HepG2 (cell line): ENCODE measurements at regions of chr18 and their contacts with region 1.

Region 1: DNA sequence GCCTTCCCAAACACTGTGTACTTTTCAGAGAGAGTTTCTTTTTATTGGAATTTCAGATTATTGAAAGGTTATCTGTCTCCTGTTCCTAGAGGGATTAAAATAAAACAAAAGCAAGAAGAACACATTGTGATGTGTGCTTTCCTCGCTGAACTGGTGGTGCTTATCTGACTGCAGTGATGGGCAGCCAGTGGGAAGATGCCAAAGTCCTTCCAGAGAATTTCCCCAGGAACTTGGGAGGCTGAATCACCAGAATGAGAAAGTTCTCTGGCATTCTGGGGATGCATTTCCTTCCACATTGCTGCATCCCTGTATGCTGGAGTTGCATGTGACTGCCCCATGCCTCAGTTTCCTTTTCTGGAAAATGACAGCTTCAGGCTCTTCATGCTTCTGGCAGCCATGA is 53.9 kb upstream of the SEC11C start:
- DNase-seq: no peak
- ATAC-seq: no peak
- H3K4me3 ChIP-seq: no peak overlapping the region
- H3K27ac ChIP-seq: no peak overlapping the region
- H3K4me1 ChIP-seq: no peaks in the 10 kb centered on the region
- H3K27me3 ChIP-seq: peaks cover 0 to 21% of the 10 kb centered on the region in 2 experiments; a peak in 4 of 5 replicates
- CTCF ChIP-seq: no peak
- EP300 ChIP-seq: no peak
- POLR2A ChIP-seq: no peak
- RAD21 ChIP-seq: no peak

Region 2: GRCh38 chr18:59139371-59140298 is 53.8 kb after region 1 on chr18 and contains the start of gene SEC11C:
- CTCF ChIA-PET with region 1: no interaction called
- POLR2A ChIA-PET with region 1: interaction called, 4 read pairs
- in situ Hi-C with region 1: no loop called
- intact Hi-C with region 1: loop called (anchors 1 kb)
- DNase-seq: peak; percentile 95
- ATAC-seq: peak; percentile 88
- H3K4me3 ChIP-seq: peak within 1 kb of the TSS; percentile 83 to 98 (median 86)
- H3K27ac ChIP-seq: peak within 1 kb of the TSS; percentile 83
- H3K4me1 ChIP-seq: peaks cover 33% of the 10 kb centered on the region
- H3K27me3 ChIP-seq: no peaks in the 10 kb centered on the region; a peak in 1 of 5 replicates
- CTCF ChIP-seq: 0 out of 2 replicates have a peak, but pooled peaks have one; percentile 3
- EP300 ChIP-seq: no peak
- POLR2A ChIP-seq: peak; percentile 51 to 62
- RAD21 ChIP-seq: no peak; the same call in 1 of the 2 replicates
- total RNA-seq, gene SEC11C: 211 and 297 TPM in 2 replicates

Region 3: DNA sequence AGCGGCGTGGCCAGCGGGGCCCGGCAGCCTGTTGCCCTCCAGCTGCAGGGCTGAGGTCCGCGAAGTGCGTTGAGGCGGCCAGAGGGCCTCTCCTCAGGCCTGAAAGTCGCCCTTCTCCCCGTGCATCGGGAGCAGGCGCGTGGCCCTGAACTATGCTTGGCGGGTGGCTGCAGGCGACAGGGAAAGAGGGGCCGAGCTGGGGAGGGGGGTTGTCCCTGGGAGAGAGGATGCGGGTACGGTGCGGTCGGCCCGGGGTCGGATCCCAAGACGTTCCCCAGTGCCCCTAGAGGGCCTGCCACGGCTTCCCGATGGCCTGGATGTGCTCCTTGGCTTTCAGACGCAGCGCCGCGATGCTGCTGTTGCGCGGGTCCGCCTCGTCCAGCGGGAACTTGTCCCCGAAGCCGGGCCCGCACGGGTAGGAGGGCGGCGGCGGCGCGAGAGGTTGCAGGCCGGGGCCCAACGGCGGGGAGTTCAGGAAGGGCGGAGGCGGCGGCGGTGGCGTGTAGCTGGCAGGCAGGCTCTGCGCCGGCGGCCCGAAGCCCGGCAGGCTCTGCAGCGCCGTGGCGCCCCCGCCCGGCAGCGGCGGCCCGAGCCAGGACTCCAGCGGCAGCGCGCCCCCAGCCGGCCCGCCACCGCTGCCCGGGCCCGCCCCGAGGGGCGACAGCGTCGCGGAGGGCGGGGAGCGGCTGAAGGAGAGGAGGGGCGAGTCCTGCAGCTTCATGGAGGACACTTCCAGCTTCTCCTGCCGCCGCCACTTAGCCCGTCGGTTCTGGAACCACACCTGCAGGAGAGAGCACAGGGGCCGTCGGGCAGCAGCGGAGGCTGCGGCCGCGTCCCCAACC is 183.1 kb after region 1 on chr18:
- CTCF ChIA-PET with region 1: no interaction called
- POLR2A ChIA-PET with region 1: no interaction called
- in situ Hi-C with region 1: loop called (anchors 10 kb)
- intact Hi-C with region 1: no loop called
- DNase-seq: peak; percentile 13
- ATAC-seq: peak; percentile 93
- H3K4me3 ChIP-seq: peak overlapping the region; percentile 30 to 70 (median 53); a peak in 4 of 6 replicates
- H3K27ac ChIP-seq: no peak overlapping the region
- H3K4me1 ChIP-seq: no peaks in the 10 kb centered on the region
- H3K27me3 ChIP-seq: peaks cover 9 to 75% of the 10 kb centered on the region in 2 experiments
- CTCF ChIP-seq: peak; percentile 42; the same call in 1 of the 2 replicates
- EP300 ChIP-seq: no peak
- POLR2A ChIP-seq: no peak
- RAD21 ChIP-seq: peak; percentile 89

Region 4: DNA sequence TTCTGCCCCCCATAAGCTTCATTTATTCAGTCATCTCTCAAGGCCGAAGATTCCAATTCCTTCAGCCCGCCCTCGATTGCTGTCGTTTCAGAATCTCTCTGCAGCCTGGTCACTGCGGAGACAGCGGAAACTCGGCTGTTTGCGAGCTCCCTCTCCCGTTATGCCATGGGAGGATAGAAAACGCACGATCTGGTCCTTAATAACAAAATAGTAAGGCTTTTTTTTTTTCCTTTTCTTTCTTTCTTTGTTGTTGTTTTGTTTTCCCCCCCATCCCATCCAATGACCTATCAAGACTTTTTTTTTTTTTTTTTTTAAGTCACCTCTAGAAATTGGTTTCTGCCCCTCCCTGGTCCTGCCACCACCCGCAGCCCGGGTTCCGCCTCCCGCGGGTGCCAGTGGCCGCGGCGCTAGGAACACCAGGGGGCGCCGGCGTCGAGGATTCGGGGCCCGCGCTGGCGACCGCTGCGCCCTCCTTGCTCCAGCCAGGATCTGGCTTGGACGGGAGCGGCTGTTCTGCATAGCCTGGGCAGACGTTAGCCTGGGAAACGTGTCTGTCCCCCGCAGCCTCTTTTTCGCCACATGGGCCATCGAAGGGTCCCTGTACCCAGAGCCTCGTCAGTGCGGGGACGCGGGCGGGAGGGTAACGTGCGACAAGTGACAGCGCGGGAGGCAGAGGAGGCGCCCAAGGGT is 222.6 kb after region 1 on chr18:
- CTCF ChIA-PET with region 1: no interaction called
- POLR2A ChIA-PET with region 1: no interaction called
- in situ Hi-C with region 1: no loop called
- intact Hi-C with region 1: loop called (anchors 5 kb)
- DNase-seq: peak; percentile 29
- ATAC-seq: peak; percentile 99
- H3K4me3 ChIP-seq: peak overlapping the region in 1 of 3 experiments; percentile 57; a peak in 2 of 6 replicates
- H3K27ac ChIP-seq: no peak overlapping the region
- H3K4me1 ChIP-seq: 0 out of 2 replicates have a peak, but pooled peaks cover 4% of the 10 kb centered on the region
- H3K27me3 ChIP-seq: peaks cover 3 to 51% of the 10 kb centered on the region in 2 experiments; a peak in 4 of 5 replicates
- CTCF ChIP-seq: peak; percentile 90
- EP300 ChIP-seq: no peak
- POLR2A ChIP-seq: no peak
- RAD21 ChIP-seq: peak; percentile 77

Region 5: GRCh38 chr18:59402432-59403090 is 316.8 kb after region 1 on chr18:
- CTCF ChIA-PET with region 1: interaction called, 3 read pairs
- POLR2A ChIA-PET with region 1: no interaction called
- in situ Hi-C with region 1: no loop called
- intact Hi-C with region 1: loop called (anchors 2 kb)
- DNase-seq: peak; percentile 90
- ATAC-seq: peak; percentile 100
- H3K4me3 ChIP-seq: no peak overlapping the region
- H3K27ac ChIP-seq: no peak overlapping the region
- H3K4me1 ChIP-seq: no peaks in the 10 kb centered on the region
- H3K27me3 ChIP-seq: 0 out of 5 replicates have a peak, but pooled peaks cover 0 to 3% of the 10 kb centered on the region in 2 experiments
- CTCF ChIP-seq: peak; percentile 98
- EP300 ChIP-seq: no peak
- POLR2A ChIP-seq: no peak
- RAD21 ChIP-seq: peak; percentile 95